HCT116 (cell line): ENCODE measurements at regions of chr1 and their contacts with region 1.

Region 1: GRCh38 chr1:167066333-167067122 is 23.6 kb downstream of the GPA33 start:
- DNase-seq: peak; percentile 35
- ATAC-seq: peak; percentile 97
- H3K4me3 ChIP-seq: peak overlapping the region in 1 of 2 experiments; percentile 26; a peak in 2 of 4 replicates
- H3K27ac ChIP-seq: no peak overlapping the region
- H3K4me1 ChIP-seq: peaks cover 0 to 8% of the 10 kb centered on the region in 2 experiments; a peak in 2 of 4 replicates
- H3K27me3 ChIP-seq: no peaks in the 10 kb centered on the region
- CTCF ChIP-seq: peak; percentile 89 to 97 (median 95)
- POLR2A ChIP-seq: no peak
- RAD21 ChIP-seq: peak; percentile 100

Region 2: DNA sequence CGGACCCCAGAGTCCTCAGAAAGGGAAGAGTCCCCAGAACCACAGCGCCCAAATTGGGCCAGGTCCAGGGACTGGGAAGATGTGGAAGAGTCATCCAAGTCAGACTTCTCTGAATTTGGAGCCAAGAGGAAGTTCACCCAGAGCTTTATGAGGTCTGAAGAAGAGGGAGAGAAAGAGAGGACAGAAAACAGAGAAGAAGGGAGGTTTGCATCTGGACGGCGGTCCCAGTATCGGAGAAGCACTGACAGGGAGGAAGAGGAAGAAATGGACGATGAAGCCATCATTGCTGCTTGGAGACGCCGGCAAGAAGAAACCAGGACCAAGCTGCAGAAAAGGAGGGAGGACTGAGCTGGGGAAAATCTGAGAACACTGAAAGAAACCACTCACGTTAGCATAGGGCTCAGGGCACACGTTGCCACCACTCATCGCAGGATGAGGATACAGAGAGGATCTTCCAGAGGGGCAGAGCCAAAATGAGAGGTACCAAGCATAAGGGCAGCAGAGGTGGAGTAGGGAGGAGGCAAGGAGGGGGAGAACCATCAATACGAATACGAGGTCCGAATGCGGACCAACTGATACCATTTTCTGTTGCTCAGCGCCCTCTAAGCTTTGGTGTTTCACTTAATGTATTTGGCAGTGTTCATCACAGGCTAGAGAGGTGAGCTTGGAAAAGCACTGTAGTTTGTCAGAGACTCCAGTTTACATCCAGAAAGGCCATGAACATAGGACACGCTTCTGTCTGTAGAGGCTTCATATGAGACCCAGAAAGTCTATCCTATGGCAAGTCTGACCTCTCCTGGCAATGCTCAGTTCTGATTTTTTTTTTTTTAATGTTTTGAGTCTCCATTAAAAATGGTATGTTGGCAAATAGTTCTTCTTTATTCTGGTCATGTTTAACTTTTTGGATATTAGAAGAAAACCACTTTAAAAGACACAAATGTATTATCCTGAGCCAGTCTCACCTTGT is 62.0 kb after region 1 on chr1:
- CTCF ChIA-PET with region 1: no interaction called
- POLR2A ChIA-PET with region 1: no interaction called
- RAD21 ChIA-PET with region 1: no interaction called
- intact Hi-C with region 1: loop called (anchors 1 kb)
- DNase-seq: no peak
- ATAC-seq: no peak
- H3K4me3 ChIP-seq: no peak overlapping the region
- H3K27ac ChIP-seq: no peak overlapping the region
- H3K4me1 ChIP-seq: no peaks in the 10 kb centered on the region
- H3K27me3 ChIP-seq: peaks cover 6% of the 10 kb centered on the region; the same call in 1 of the 2 replicates
- CTCF ChIP-seq: peak in 2 of 3 experiments; percentile 17 to 23; a peak in 1 of 6 replicates
- POLR2A ChIP-seq: no peak
- RAD21 ChIP-seq: peak; percentile 44; the same call in 1 of the 2 replicates

Region 3: GRCh38 chr1:167220537-167221125 is 154.1 kb after region 1 on chr1 and contains the start of gene POU2F1:
- CTCF ChIA-PET with region 1: interaction called, 7 read pairs
- POLR2A ChIA-PET with region 1: no interaction called
- RAD21 ChIA-PET with region 1: interaction called, 3 to 4 read pairs
- intact Hi-C with region 1: loop called (anchors 2 kb)
- DNase-seq: peak; percentile 96
- ATAC-seq: peak; percentile 85
- H3K4me3 ChIP-seq: peak within 1 kb of the TSS; percentile 69 to 75
- H3K27ac ChIP-seq: peak within 1 kb of the TSS; percentile 95
- H3K4me1 ChIP-seq: peaks cover 14 to 39% of the 10 kb centered on the region in 2 experiments
- H3K27me3 ChIP-seq: no peaks in the 10 kb centered on the region
- CTCF ChIP-seq: peak; percentile 61 to 70 (median 66); a peak in 5 of 6 replicates
- POLR2A ChIP-seq: no peak
- RAD21 ChIP-seq: peak; percentile 64
- total RNA-seq, gene POU2F1: 24.5 TPM

Region 4: DNA sequence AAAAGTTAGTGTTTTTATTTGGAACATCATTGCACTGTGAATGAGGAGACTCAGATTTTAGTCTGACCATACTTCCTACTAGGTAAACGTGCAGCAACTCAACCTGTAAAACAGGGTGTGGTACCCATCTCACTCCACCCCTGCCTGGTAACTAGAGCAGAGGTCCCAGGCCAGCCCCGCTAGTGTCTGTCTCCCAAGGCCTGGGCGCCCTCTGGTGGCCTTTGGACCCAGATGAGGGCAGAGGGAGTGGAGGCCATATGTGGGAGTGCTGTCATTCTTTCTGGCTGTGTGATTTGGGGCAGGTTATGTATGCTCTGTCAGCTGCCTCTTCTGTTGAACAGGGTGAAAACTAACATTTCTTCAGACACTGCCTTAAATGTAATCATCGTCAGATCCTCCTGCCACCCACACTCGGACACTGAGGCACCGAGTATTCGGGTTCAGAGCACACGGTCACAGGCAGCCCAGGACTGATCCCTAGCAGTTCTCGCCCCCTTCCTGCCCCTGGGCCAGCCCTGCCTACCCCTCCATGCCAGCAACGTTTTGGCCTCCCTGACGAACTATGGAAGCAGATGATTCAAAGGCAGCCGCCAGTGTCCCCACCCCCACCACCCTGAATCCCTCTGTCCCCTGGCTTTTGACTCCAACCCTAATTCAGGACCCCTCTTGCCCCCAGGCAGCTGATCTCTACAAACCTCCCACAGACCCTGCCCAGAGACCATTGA is 375.8 kb after region 1 on chr1:
- CTCF ChIA-PET with region 1: no interaction called
- POLR2A ChIA-PET with region 1: interaction called, 3 read pairs
- RAD21 ChIA-PET with region 1: no interaction called
- intact Hi-C with region 1: loop called (anchors 1 kb)
- DNase-seq: peak; percentile 77
- ATAC-seq: peak; percentile 99
- H3K4me3 ChIP-seq: no peak overlapping the region
- H3K27ac ChIP-seq: no peak overlapping the region
- H3K4me1 ChIP-seq: peaks cover 0 to 16% of the 10 kb centered on the region in 2 experiments; a peak in 3 of 4 replicates
- H3K27me3 ChIP-seq: no peaks in the 10 kb centered on the region
- CTCF ChIP-seq: peak; percentile 88 to 95 (median 93)
- POLR2A ChIP-seq: no peak
- RAD21 ChIP-seq: peak; percentile 99

Region 5: GRCh38 chr1:167687919-167688519 is 621.5 kb after region 1 on chr1:
- CTCF ChIA-PET with region 1: no interaction called
- POLR2A ChIA-PET with region 1: no interaction called
- RAD21 ChIA-PET with region 1: no interaction called
- intact Hi-C with region 1: loop called (anchors 5 kb)
- DNase-seq: peak; percentile 72
- ATAC-seq: peak; percentile 86
- H3K4me3 ChIP-seq: no peak overlapping the region
- H3K27ac ChIP-seq: no peak overlapping the region
- H3K4me1 ChIP-seq: no peaks in the 10 kb centered on the region
- H3K27me3 ChIP-seq: no peaks in the 10 kb centered on the region
- CTCF ChIP-seq: peak; percentile 83 to 89 (median 85)
- POLR2A ChIP-seq: no peak
- RAD21 ChIP-seq: peak; percentile 89